ENCODE measurements at regions of chr17 and their contacts with region 1.

Region 1: DNA sequence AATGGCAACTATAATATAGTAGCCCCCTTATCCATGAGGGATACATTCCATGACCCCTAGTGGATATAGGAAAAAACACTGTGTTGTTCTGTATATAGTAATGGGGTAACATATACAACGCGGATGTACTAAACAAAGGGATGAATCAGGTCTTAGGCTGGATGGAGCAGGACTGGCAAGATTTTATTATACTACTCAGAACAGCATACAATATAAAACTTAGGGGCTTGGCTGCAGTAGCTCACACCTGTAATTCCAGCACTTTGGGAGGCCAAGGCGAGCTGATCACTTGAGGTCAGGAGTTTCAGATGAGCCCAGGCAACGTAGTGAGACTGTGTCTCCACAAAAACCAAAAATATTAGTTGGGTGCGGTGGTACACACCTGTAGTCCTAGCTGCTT is 26.8 kb downstream of the VMP1 start:
- DNase-seq: no peak
- ATAC-seq: no peak
- H3K4me3 ChIP-seq: no peak overlapping the region
- H3K27ac ChIP-seq: no peak overlapping the region
- H3K4me1 ChIP-seq: peaks cover 5% of the 10 kb centered on the region; the same call in 1 of the 2 replicates
- H3K27me3 ChIP-seq: no peaks in the 10 kb centered on the region
- CTCF ChIP-seq: no peak

Region 2: DNA sequence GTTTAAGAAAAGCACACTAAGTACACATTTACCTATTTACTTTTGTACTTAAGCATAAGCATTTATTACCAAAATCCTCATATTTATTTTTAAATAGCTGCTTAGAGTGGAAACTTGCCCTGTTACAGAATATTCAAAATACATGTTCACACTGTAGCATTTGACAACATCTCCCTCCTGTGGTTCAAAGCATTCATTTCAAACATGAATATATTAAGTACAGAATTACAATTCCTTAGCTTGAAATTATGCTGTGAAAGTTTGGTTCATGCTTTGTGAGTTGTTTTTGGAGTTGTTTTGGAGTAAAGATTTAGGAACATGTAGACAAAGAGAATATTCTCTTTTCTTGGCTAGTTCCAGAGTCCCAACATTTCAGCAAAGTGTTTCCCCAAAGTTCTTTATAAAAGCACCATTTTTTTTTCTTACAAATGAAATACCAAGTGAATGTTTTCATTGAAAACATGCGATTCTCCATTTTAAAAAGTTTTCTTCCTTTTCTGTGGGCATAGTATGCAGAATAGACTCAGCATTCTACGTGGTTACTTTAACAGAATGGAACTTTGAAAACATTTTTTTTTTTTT is 125.3 kb after region 1 on chr17:
- CTCF ChIA-PET with region 1: no interaction called
- POLR2A ChIA-PET with region 1: interaction called, 13 read pairs
- in situ Hi-C with region 1: no loop called
- intact Hi-C with region 1: no loop called
- DNase-seq: no peak
- ATAC-seq: peak; percentile 56
- H3K4me3 ChIP-seq: no peak overlapping the region
- H3K27ac ChIP-seq: peak overlapping the region; percentile 100
- H3K4me1 ChIP-seq: peaks cover 36% of the 10 kb centered on the region
- H3K27me3 ChIP-seq: no peaks in the 10 kb centered on the region
- CTCF ChIP-seq: no peak